CD4-positive, alpha-beta T cell (primary cell): ENCODE measurements at regions of chr3 and their contacts with region 1.

Region 1: GRCh38 chr3:43540624-43541023 is 81.2 kb downstream of the ANO10 start:
- DNase-seq: no peak
- ATAC-seq: no peak
- H3K4me3 ChIP-seq: no peak overlapping the region
- H3K4me3 Mint-ChIP-seq: no peak overlapping the region
- H3K27ac ChIP-seq: no peak overlapping the region
- H3K27ac Mint-ChIP-seq: no peak overlapping the region
- H3K4me1 ChIP-seq: no peaks in the 10 kb centered on the region
- H3K4me1 Mint-ChIP-seq: no peaks in the 10 kb centered on the region
- H3K27me3 ChIP-seq: no peaks in the 10 kb centered on the region
- H3K27me3 Mint-ChIP-seq: no peaks in the 10 kb centered on the region
- CTCF ChIP-seq: no peak

Region 2: GRCh38 chr3:43036621-43037423 is 503.8 kb before region 1 on chr3:
- CTCF ChIA-PET with region 1: no interaction called
- POLR2A ChIA-PET with region 1: no interaction called
- intact Hi-C with region 1: no loop called
- DNase-seq: peak in 1 of 14 experiments; percentile 46
- ATAC-seq: no peak
- H3K4me3 ChIP-seq: no peak overlapping the region
- H3K4me3 Mint-ChIP-seq: no peak overlapping the region
- H3K27ac ChIP-seq: no peak overlapping the region
- H3K27ac Mint-ChIP-seq: no peak overlapping the region
- H3K4me1 ChIP-seq: no peaks in the 10 kb centered on the region
- H3K4me1 Mint-ChIP-seq: peaks cover 12% of the 10 kb centered on the region
- H3K27me3 ChIP-seq: no peaks in the 10 kb centered on the region
- H3K27me3 Mint-ChIP-seq: no peaks in the 10 kb centered on the region
- CTCF ChIP-seq: no peak

Region 3: GRCh38 chr3:43638594-43639447 is 98.2 kb after region 1 on chr3:
- CTCF ChIA-PET with region 1: no interaction called
- POLR2A ChIA-PET with region 1: no interaction called
- intact Hi-C with region 1: loop called in 1 of 2 experiments (anchors 5 kb)
- DNase-seq: peak in 10 of 14 experiments; percentile 8 to 62 (median 28)
- ATAC-seq: peak; percentile 43
- H3K4me3 ChIP-seq: no peak overlapping the region
- H3K4me3 Mint-ChIP-seq: no peak overlapping the region
- H3K27ac ChIP-seq: no peak overlapping the region
- H3K27ac Mint-ChIP-seq: no peak overlapping the region
- H3K4me1 ChIP-seq: peaks cover 3% of the 10 kb centered on the region
- H3K4me1 Mint-ChIP-seq: no peaks in the 10 kb centered on the region
- H3K27me3 ChIP-seq: no peaks in the 10 kb centered on the region
- H3K27me3 Mint-ChIP-seq: peaks cover 9% of the 10 kb centered on the region
- CTCF ChIP-seq: no peak

Region 4: DNA sequence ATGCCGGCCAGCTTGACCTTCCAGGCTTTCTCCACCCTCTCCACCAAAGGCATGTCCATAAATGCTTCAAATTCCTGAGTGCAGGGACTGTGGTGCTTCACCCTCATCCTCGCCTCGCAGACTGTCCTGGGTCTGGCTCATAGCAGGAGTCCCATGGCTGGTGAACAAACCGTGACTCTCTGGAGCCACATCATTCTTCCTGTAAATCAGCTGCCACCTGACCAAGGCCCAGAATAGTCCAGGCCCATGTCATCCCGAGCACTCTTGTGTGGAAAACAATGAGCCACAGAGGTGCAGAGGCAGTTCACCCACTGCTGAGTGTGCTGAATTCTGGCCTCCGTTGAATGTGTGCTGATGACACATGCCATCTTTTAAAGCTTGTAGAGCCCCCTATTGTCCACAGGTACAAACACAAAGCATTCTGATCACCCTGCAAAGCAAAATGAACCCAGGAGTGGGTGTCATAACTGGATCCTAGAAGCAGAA is 218.7 kb after region 1 on chr3:
- CTCF ChIA-PET with region 1: no interaction called
- POLR2A ChIA-PET with region 1: no interaction called
- intact Hi-C with region 1: loop called in 1 of 2 experiments (anchors 5 kb)
- DNase-seq: peak in 3 of 14 experiments; percentile 24 to 30 (median 24)
- ATAC-seq: no peak
- H3K4me3 ChIP-seq: no peak overlapping the region
- H3K4me3 Mint-ChIP-seq: no peak overlapping the region
- H3K27ac ChIP-seq: no peak overlapping the region
- H3K27ac Mint-ChIP-seq: peak overlapping the region; percentile 19
- H3K4me1 ChIP-seq: peaks cover 40% of the 10 kb centered on the region
- H3K4me1 Mint-ChIP-seq: peaks cover 52% of the 10 kb centered on the region
- H3K27me3 ChIP-seq: no peaks in the 10 kb centered on the region
- H3K27me3 Mint-ChIP-seq: no peaks in the 10 kb centered on the region
- CTCF ChIP-seq: peak; percentile 38

Region 5: GRCh38 chr3:44077246-44077645 is 536.6 kb after region 1 on chr3:
- CTCF ChIA-PET with region 1: no interaction called
- POLR2A ChIA-PET with region 1: no interaction called
- intact Hi-C with region 1: loop called in 1 of 2 experiments (anchors 5 kb)
- DNase-seq: peak in 1 of 14 experiments; percentile 5
- ATAC-seq: no peak
- H3K4me3 ChIP-seq: no peak overlapping the region
- H3K4me3 Mint-ChIP-seq: no peak overlapping the region
- H3K27ac ChIP-seq: no peak overlapping the region
- H3K27ac Mint-ChIP-seq: no peak overlapping the region
- H3K4me1 ChIP-seq: no peaks in the 10 kb centered on the region
- H3K4me1 Mint-ChIP-seq: no peaks in the 10 kb centered on the region
- H3K27me3 ChIP-seq: no peaks in the 10 kb centered on the region
- H3K27me3 Mint-ChIP-seq: peaks cover 2% of the 10 kb centered on the region
- CTCF ChIP-seq: no peak

Region 6: GRCh38 chr3:44114142-44114541 is 573.5 kb after region 1 on chr3:
- CTCF ChIA-PET with region 1: no interaction called
- POLR2A ChIA-PET with region 1: no interaction called
- intact Hi-C with region 1: loop called (anchors 2 to 5 kb)
- DNase-seq: peak in 13 of 14 experiments; percentile 4 to 48 (median 25)
- ATAC-seq: no peak
- H3K4me3 ChIP-seq: no peak overlapping the region
- H3K4me3 Mint-ChIP-seq: no peak overlapping the region
- H3K27ac ChIP-seq: no peak overlapping the region
- H3K27ac Mint-ChIP-seq: no peak overlapping the region
- H3K4me1 ChIP-seq: no peaks in the 10 kb centered on the region
- H3K4me1 Mint-ChIP-seq: no peaks in the 10 kb centered on the region
- H3K27me3 ChIP-seq: peaks cover 5 to 15% of the 10 kb centered on the region in 2 experiments
- H3K27me3 Mint-ChIP-seq: peaks cover 44% of the 10 kb centered on the region
- CTCF ChIP-seq: peak; percentile 21

Region 7: GRCh38 chr3:44198284-44199269 is 658.0 kb after region 1 on chr3:
- CTCF ChIA-PET with region 1: interaction called, 5 read pairs
- POLR2A ChIA-PET with region 1: no interaction called
- intact Hi-C with region 1: loop called (anchors 1 kb)
- DNase-seq: peak; percentile 44 to 79 (median 55)
- ATAC-seq: peak; percentile 78
- H3K4me3 ChIP-seq: no peak overlapping the region
- H3K4me3 Mint-ChIP-seq: no peak overlapping the region
- H3K27ac ChIP-seq: no peak overlapping the region
- H3K27ac Mint-ChIP-seq: no peak overlapping the region
- H3K4me1 ChIP-seq: peaks cover 5% of the 10 kb centered on the region
- H3K4me1 Mint-ChIP-seq: no peaks in the 10 kb centered on the region
- H3K27me3 ChIP-seq: peaks cover under 1 to 10% of the 10 kb centered on the region in 2 experiments
- H3K27me3 Mint-ChIP-seq: peaks cover 43% of the 10 kb centered on the region
- CTCF ChIP-seq: peak; percentile 87

Region 8: GRCh38 chr3:44235604-44236484 is 695.2 kb after region 1 on chr3:
- CTCF ChIA-PET with region 1: no interaction called
- POLR2A ChIA-PET with region 1: no interaction called
- intact Hi-C with region 1: loop called (anchors 1 to 2 kb)
- DNase-seq: peak; percentile 25 to 82 (median 46)
- ATAC-seq: peak; percentile 95
- H3K4me3 ChIP-seq: no peak overlapping the region
- H3K4me3 Mint-ChIP-seq: no peak overlapping the region
- H3K27ac ChIP-seq: no peak overlapping the region
- H3K27ac Mint-ChIP-seq: no peak overlapping the region
- H3K4me1 ChIP-seq: peaks cover 6% of the 10 kb centered on the region
- H3K4me1 Mint-ChIP-seq: peaks cover 15% of the 10 kb centered on the region
- H3K27me3 ChIP-seq: no peaks in the 10 kb centered on the region
- H3K27me3 Mint-ChIP-seq: peaks cover 21% of the 10 kb centered on the region
- CTCF ChIP-seq: peak; percentile 82